Head of caudate nucleus (tissue), 42 donors: ENCODE measurements at regions of chr17 and their contacts with region 1.

Region 1: GRCh38 chr17:76523084-76524037 is 14.1 kb downstream of the CYGB start:
- DNase-seq: peak; percentile 49 to 92 (median 80)

Region 2: DNA sequence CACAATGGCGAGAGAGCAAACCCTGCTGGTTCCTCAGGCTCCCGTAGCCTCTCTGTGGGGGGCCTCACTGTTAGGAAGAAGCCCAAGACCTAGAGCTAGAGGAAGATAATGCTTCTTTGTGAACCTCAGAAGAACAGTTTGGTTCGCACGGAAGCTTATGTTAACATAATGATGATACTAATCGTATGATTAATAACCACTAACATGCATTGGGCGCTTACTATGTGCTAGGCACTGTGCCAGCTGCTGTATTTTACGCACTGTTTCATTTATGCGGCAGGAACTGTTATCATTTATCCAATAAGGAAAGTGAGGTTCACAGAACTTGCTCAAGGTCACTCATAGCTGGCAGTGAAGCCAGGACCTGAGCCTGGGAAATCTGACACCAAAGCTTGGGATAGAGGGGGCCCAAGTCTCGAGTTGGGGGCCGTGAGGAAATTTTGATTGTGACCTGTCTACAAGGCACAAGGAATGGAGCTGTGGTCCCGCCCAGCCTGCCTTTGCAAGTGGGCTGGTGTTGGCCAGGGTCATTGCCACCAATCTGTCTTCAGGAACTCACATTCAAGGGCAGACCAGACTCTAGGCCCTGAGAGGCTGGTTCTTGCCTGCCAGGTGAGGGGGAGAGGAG is 23.3 kb after region 1 on chr17:
- intact Hi-C with region 1: loop called (anchors 1 kb)
- DNase-seq: no peak

Region 3: DNA sequence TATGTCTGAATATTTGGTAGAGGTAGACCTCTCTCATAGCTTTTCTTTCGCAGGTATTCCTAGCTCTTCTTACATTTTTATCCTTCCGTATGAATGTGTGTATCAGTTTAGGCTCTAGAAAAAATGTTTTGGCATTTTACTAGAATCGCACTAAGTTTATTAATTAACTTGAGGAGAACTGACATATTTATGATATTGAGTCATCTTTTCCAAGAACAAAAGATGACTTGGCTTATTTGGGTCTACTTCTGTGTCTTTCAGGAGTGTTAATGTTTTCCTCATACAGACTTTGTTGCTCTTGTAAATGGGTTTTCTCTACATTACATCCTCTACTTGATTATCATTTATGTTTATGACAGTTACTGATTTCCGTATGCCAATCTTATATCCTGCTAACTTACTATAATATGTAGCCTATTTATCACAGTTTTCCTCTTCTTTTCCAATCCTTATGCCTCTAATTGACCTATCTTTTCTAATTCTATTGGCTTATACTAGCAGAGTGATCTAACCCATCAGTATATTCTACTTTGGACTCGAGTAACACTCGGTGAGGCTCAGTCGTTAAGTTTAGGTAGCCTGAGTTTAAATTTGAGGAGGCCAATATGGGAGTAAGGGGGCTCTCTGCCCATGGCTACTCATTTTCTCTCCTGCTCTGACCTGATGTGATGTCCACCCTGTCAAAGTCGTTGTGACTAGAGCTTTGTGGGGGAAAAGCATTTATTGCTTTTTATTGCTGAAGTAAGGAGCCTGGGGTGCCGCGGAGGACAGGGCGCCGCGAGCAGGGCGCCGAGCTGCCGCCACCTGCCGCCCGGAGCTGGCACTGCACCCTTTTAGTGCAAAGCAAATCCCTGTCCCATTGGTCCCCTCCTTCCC is 100.1 kb after region 1 on chr17:
- intact Hi-C with region 1: loop called (anchors 10 kb)
- DNase-seq: peak; percentile 42 to 92 (median 80)